ENCODE measurements at regions of chr20 and their contacts with region 1.

Region 1: DNA sequence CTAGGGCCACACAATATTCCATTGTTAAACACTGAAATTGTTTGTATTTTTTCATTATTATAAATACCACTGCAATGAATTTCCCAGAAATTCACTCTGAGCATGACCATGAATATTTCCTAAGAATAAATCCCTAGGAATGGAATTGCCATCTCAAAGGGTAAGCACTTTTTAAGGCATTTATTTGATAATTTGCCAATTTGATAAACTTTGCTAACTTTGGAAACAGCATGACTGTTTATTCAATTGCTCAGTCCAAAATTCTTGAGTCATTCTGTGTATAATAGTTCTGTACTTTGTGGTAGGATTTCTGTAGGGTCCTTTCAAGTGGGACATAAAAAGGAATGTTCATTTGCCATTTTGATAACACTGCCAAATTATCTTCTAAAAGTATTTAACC is 44.2 kb upstream of the TOX2 start:
- DNase-seq: no peak
- H3K4me3 ChIP-seq: no peak overlapping the region
- H3K27ac ChIP-seq: no peak overlapping the region
- H3K4me1 ChIP-seq: no peaks in the 10 kb centered on the region
- H3K27me3 ChIP-seq: no peaks in the 10 kb centered on the region
- CTCF ChIP-seq: no peak
- EP300 ChIP-seq: no peak
- POLR2A ChIP-seq: no peak

Region 2: GRCh38 chr20:44431502-44432234 is 561.2 kb after region 1 on chr20:
- in situ Hi-C with region 1: no loop called
- intact Hi-C with region 1: loop called (anchors 5 kb)
- DNase-seq: no peak
- H3K4me3 ChIP-seq: no peak overlapping the region
- H3K27ac ChIP-seq: peak overlapping the region in 3 of 4 donors; percentile 43 to 89 (median 60)
- H3K4me1 ChIP-seq: peaks cover 0 to 30% (median 21%) of the 10 kb centered on the region in 4 donors
- H3K27me3 ChIP-seq: no peaks in the 10 kb centered on the region
- CTCF ChIP-seq: no peak
- EP300 ChIP-seq: no peak
- POLR2A ChIP-seq: peak; percentile 27

Measured in transverse colon (tissue), 4 donors.